Activated T-helper 2 cell treated with anti-CD3 and anti-CD28 coated beads, Interferon-gamma antibody, Interleukin-2, Interleukin-4, amounts not matched to agents 10 μg/mL and 5 μg/mL and 100 μg/mL, durations not matched to agents 14 hours and 24 hours and 36 hours (primary cell): ENCODE measurements at regions of chr12 and their contacts with region 1.

Region 1: DNA sequence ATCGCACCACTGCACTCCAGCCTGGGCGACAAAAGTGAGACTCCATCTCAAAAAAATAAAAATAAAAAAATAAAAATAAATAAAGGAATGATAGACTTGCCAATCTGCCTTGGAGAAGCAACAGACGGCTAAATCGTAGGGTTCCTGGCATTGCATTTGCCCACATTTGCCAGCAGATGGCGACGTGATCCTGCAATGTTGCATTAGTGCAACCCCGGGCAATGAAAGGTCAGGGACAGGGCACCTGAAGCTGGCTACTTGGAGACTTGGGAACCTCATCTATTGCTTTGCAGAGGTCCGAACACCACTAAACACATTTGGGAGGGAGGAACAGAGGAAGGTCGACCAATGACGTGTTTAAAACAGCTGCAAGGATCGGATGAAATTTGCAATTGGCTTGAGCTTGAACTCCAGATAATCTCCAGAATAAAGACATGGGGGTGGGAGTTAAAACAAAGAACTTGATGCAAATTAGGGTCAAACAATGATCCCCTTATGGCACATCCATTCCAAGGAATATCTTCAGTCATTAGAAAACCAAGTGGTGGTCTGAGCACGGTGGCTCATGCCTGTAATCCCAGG is 34.6 kb downstream of the SPRING1 start:
- DNase-seq: peak; percentile 51
- H3K4me3 Mint-ChIP-seq: no peak overlapping the region
- H3K27ac Mint-ChIP-seq: no peak overlapping the region
- H3K4me1 Mint-ChIP-seq: peaks cover 2% of the 10 kb centered on the region
- H3K27me3 Mint-ChIP-seq: peaks cover 8% of the 10 kb centered on the region

Region 2: DNA sequence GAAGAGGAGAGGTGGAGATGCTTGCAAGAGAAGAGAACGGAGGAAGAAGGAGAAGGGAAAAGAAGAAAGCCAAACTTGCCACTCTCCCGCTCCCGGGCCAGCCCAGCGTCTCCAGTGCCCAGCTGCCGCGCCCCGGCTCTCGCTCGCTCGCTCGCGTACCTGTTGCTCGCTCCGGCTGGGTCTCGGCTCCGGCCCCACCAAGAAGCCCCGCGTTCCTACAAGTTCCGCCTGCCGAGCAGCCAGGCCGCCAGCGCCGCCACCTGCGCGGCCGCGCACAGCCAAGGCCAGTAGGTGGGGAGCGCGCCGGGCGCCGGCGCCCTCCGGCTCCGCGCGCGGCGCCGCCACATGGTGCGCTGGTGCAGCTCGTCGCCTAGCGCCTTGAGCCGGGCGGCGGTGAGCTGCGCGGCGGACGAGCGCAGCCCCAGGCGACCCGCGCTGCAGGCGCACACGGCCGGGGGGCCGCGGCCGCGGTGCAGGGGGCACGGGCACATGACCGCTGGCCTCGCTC is 177.6 kb after region 1 on chr12:
- intact Hi-C with region 1: loop called (anchors 10 kb)
- DNase-seq: peak; percentile 14
- H3K4me3 Mint-ChIP-seq: peak overlapping the region; percentile 46
- H3K27ac Mint-ChIP-seq: no peak overlapping the region
- H3K4me1 Mint-ChIP-seq: peaks cover 14% of the 10 kb centered on the region
- H3K27me3 Mint-ChIP-seq: peaks cover 69% of the 10 kb centered on the region